Mammary epithelial cell (primary cell): ENCODE measurements at regions of chr4 and their contacts with region 1.

Region 1: DNA sequence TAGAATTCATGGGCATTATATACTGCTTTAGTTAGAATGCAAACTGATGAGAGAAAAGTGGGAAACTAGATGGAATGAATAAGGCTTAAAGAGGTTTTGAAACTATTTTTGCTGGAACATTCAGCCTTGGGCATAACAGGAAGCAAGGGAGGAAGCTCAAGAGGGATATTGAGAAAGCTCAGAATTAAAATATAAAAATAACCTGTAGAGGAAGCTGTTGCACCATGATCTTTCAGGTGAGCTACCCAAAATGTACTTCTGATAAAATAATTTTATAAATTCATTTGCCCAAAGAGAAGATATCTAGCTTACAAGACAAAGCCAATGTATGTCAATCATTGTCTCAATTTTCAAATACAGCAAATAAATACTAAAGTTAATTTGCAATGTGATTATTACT is 11.3 kb downstream of the GC start:
- DNase-seq: no peak
- H3K4me3 ChIP-seq: no peak overlapping the region
- H3K27ac ChIP-seq: no peak overlapping the region
- H3K4me1 ChIP-seq: no peaks in the 10 kb centered on the region
- H3K27me3 ChIP-seq: no peaks in the 10 kb centered on the region
- CTCF ChIP-seq: peak; percentile 20 to 34

Region 2: DNA sequence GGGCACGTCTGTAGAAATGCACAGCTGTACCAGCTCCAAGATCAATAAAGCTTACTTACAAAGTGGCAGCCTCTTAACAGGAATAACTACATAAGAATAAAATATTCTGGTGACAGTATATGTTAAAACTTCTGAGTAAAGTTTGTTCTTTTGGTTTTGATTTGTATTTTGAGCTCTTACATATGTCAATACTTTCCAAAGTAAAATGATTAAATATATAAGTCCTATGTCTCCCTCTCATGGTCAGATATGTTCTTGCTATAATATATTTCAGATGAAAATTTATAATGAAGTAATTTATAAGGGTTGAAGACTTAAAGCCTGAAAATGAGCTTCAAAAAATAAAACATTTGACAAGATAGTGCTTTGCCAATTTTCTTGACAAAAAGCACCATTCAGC is 513.6 kb after region 1 on chr4:
- CTCF ChIA-PET with region 1: interaction called, 4 read pairs
- dilution Hi-C with region 1: no loop called
- in situ Hi-C with region 1: loop called in 1 of 2 experiments (anchors 25 kb)
- intact Hi-C with region 1: loop called (anchors 5 kb)
- DNase-seq: peak; percentile 11
- H3K4me3 ChIP-seq: no peak overlapping the region
- H3K27ac ChIP-seq: no peak overlapping the region
- H3K4me1 ChIP-seq: no peaks in the 10 kb centered on the region
- H3K27me3 ChIP-seq: no peaks in the 10 kb centered on the region
- CTCF ChIP-seq: peak; percentile 15 to 37

Region 3: DNA sequence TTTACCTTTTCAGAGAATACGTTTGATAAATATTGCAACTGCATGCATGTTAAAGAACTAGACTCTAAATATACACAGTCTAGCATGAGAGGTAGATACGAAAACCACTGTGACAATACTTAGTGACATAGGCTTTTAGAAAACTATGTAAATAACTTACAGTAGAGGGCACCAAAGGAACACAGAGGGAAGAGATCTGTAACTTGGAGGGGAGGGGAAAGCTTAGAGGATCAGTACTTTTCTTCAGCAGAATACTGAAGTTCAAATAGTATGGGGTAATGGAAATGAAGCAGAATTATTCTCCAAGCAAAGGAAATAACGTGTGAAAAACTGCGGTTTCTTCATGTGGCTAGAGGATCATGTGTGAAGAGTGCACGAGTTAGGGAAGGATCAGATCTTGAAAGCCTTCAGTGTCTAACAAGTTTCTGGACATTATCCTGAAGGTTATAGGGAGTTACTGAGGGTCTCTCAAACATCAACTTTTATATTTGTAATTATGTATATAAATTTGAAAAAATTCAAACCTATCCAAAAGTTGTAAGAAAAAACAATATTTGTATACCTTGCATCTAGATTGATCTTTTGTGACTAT is 523.5 kb after region 1 on chr4:
- CTCF ChIA-PET with region 1: no interaction called
- dilution Hi-C with region 1: no loop called
- in situ Hi-C with region 1: loop called in 1 of 2 experiments (anchors 25 kb)
- intact Hi-C with region 1: no loop called
- DNase-seq: peak; percentile 34
- H3K4me3 ChIP-seq: no peak overlapping the region
- H3K27ac ChIP-seq: no peak overlapping the region
- H3K4me1 ChIP-seq: no peaks in the 10 kb centered on the region
- H3K27me3 ChIP-seq: no peaks in the 10 kb centered on the region
- CTCF ChIP-seq: peak; percentile 54 to 79